Activated CD4-positive, alpha-beta T cell treated with anti-CD3 and anti-CD28 coated beads for 36 hours (primary cell): ENCODE measurements at regions of chr17 and their contacts with region 1.

Region 1: DNA sequence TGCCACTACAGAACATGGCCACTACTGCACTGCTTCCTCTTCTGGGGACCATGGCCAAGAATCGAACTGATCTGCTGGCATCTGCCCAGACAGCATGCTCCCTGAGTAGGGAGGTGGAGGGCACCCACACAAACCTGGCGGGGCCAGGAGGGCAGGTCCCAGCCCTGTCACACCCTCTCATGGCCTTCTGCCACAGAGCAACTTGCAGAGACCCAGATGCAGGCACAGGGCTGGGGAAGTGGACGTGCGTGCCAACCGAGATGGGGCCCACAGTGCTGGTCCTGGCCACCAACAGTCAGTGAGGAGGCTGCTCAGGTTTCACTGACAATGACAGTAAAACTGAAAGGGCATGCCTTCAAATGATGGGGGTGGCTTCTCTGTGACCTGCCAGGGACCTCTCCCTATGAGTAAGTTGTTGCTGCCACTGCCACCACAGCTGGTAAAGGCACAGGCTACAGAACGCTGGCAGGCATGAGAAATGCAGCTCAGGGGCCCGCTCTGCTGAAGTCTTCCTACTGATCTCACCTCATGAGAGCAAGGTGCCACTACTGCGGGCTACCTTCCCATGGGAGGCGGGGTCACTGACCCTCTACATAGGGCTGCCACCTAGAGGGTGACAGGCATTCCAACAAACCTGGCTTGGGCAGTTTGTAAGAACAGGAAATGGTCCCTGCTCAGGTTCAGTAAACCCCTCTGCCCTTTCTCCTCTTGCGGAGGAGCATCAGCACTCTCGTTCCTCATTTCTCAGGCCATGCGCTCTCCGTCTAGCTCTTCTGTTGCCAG is 15.5 kb downstream of the HIC1 start:
- DNase-seq: peak; percentile 91
- ATAC-seq: peak; percentile 88
- H3K4me3 Mint-ChIP-seq: peak overlapping the region; percentile 36
- H3K27ac Mint-ChIP-seq: peak overlapping the region; percentile 82
- H3K4me1 Mint-ChIP-seq: peaks cover 36% of the 10 kb centered on the region
- H3K27me3 Mint-ChIP-seq: peaks cover 3% of the 10 kb centered on the region

Region 2: GRCh38 chr17:2087597-2088211 is 17.3 kb after region 1 on chr17:
- CTCF ChIA-PET with region 1: interaction called, 15 read pairs
- POLR2A ChIA-PET with region 1: interaction called, 23 read pairs
- intact Hi-C with region 1: loop called (anchors 1 kb)
- DNase-seq: peak; percentile 78
- ATAC-seq: peak; percentile 62
- H3K4me3 Mint-ChIP-seq: peak overlapping the region; percentile 7
- H3K27ac Mint-ChIP-seq: peak overlapping the region; percentile 2
- H3K4me1 Mint-ChIP-seq: peaks cover 69% of the 10 kb centered on the region
- H3K27me3 Mint-ChIP-seq: no peaks in the 10 kb centered on the region

Region 3: GRCh38 chr17:2094891-2095535 is 24.6 kb after region 1 on chr17:
- CTCF ChIA-PET with region 1: interaction called, 15 read pairs
- POLR2A ChIA-PET with region 1: no interaction called
- intact Hi-C with region 1: no loop called
- DNase-seq: no peak
- ATAC-seq: no peak
- H3K4me3 Mint-ChIP-seq: no peak overlapping the region
- H3K27ac Mint-ChIP-seq: no peak overlapping the region
- H3K4me1 Mint-ChIP-seq: peaks cover 19% of the 10 kb centered on the region
- H3K27me3 Mint-ChIP-seq: no peaks in the 10 kb centered on the region

Region 4: GRCh38 chr17:2259769-2260536 is 189.5 kb after region 1 on chr17:
- CTCF ChIA-PET with region 1: no interaction called
- POLR2A ChIA-PET with region 1: no interaction called
- intact Hi-C with region 1: loop called in 1 of 2 experiments (anchors 5 kb)
- DNase-seq: peak; percentile 90
- ATAC-seq: peak; percentile 74
- H3K4me3 Mint-ChIP-seq: peak overlapping the region; percentile 64
- H3K27ac Mint-ChIP-seq: peak overlapping the region; percentile 90
- H3K4me1 Mint-ChIP-seq: peaks cover 73% of the 10 kb centered on the region
- H3K27me3 Mint-ChIP-seq: no peaks in the 10 kb centered on the region

Region 5: DNA sequence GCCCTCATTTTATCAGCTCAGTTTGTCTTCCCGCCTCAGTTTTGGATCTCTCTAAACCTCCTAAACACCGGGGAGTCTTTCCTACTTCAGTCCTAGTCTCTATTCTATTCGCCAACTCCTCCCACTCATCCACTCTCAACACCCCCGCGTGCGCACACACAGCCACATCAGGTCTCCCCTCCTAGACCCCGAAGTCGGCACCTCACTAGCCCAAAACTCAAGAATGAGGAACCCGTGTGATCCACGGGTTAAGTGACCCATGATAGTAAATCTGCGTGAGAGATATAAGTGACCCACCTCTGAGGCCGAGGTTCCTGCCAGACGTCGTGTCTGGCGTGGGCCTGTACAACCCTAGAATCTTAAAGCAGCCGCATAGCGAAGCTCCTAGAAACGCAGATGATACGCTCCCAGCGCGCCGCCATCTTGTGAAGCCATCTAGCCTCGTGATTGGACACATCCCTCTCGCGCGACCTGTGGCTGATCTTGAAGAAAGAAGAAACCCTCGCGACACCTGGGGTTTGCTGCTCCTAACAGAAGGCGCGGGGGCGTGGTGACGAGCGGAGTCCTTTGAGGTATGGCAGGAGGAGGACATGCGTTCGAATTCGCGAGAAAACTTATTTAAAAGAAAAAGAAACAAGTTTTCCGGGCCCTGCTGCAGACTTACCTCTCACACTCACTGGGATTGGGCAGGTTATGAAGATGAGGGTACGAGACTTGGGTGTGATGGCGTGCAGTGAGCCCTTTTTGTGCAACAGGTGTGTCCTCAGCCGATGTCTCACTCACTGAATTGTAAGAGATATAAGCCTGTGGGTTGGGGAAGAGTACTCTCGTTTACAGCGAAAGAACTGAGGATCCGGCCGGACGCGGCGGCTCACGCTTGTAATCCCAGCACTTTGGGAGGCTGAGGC is 441.3 kb after region 1 on chr17 and contains the start of gene METTL16:
- CTCF ChIA-PET with region 1: no interaction called
- POLR2A ChIA-PET with region 1: no interaction called
- intact Hi-C with region 1: no loop called
- DNase-seq: peak; percentile 100
- ATAC-seq: peak; percentile 99
- H3K4me3 Mint-ChIP-seq: no peak within 1 kb of the TSS
- H3K27ac Mint-ChIP-seq: no peak within 1 kb of the TSS
- H3K4me1 Mint-ChIP-seq: peaks cover 17% of the 10 kb centered on the region
- H3K27me3 Mint-ChIP-seq: no peaks in the 10 kb centered on the region
- total RNA-seq, gene METTL16: 50.1 to 61.6 TPM